Posterior cingulate gyrus (tissue), 11 donors: ENCODE measurements at regions of chr13 and their contacts with region 1.

Region 1: DNA sequence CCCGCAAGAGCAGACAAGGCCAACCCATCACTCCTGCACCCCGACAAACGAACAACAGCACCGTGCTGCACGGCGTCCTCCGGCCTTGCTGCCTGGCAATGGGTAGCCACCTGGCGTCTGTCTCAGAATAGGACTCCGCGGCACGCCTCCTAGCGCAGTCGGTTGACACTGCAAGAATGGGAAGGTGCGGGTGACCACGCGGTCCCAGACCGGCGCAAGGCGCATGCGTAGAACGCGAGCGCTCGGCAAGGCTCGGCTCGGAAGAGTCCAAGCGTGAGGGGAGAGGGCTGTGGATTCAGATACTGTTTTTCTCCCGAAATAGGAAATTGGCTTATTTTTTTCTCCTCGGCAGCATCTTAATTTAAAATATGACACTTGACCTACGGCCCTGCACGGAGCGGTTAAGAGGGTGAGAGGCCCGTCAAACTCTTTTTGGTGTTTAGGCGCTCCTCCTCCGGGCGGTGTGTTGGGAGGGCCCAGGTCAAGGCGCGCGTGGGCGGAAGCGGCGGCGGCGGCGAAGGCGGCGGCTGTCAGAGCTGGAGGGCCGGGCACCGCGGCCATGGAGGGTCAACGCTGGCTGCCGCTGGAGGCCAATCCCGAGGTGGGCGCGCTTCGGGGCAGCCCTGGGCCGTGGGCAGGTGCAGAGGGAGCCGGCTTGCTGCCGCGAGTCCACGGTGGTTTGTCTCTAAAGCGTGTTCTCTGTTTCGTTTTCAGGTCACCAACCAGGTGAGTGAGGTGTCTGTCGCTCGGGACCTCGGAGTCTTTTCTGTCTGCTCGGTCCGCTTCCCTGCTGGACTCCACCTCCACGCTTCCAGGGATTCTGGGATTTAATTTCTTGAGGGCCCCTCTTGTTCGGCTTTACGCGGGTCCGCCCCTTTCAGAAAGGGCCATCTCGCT is at the start of gene UCHL3:
- DNase-seq: peak; percentile 93 to 99 (median 94)

Region 2: GRCh38 chr13:75271846-75272245 is 277.7 kb before region 1 on chr13:
- intact Hi-C with region 1: no loop called
- DNase-seq: no peak

Region 3: DNA sequence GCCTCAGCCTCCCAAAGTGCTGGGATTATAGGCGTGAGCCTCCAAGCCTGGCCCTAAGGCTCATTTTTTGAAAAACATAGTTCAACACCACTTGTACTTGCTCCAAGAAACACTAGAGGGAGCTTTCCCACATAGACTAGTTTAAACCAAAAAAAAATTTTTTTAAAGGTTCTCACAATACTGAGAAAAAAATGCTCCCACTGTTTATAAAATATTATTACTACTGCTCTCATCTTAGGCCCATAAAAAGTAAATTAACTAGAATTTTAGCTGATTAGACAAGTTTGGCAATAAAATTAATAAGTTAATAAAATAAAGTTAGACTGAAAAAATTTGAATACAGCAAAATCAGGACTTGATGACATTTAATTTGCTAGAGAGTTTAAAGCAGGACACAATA is 177.0 kb before region 1 on chr13:
- intact Hi-C with region 1: loop called (anchors 2 kb)
- DNase-seq: no peak

Region 4: GRCh38 chr13:75482070-75482819 is 67.3 kb before region 1 on chr13 and contains the start of gene TBC1D4:
- intact Hi-C with region 1: loop called (anchors 5 kb)
- DNase-seq: peak; percentile 64 to 95 (median 75)

Region 5: DNA sequence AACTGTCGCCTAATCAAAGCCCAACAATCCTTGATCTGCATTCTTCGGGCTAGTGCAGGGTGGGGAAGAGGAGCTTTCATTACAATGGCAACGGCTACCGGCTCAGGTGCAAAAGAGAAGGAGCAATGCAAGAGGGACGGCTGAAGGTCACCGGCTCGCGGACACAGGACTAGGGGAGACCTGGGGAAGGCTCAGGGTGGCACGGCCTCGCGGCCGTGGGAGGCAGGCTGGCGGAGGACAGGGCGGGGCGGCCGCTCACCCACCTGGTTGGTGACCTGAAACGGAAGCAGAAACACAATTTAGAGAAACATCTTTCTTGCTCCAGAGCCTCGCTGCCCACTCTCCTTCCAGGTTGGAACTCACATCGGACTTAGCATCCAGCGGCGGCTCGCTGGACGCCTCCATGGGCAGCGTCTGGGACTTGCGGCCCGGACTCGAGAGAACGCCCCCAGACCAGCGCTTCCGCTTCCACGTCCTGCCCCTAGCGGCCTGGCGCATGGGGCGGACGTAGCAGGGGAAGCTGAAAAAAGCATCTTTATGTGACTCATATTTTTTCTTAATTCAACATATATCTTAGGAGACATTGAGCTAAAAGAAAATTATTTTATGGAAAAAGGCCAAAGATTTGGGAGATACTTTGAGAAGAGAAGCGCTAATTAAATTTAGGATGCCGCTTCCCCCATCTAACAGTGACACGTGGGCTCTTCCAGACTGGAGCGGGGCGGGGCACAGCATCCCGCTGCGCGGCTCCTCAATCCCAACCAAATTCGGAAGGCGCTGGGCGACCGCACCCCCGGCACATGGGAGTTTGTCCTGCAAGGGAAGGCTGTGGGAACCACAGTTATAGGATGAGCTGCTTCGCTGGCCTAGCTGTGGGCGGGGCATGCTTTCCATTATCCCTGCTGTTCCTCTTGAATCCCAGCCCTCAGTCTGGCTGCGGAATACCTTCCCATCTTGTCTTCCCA is 11.8 kb before region 1 on chr13 and contains the start of gene COMMD6:
- intact Hi-C with region 1: loop called (anchors 1 kb)
- DNase-seq: peak; percentile 64 to 97 (median 80)